Natural killer cell (primary cell): ENCODE measurements at regions of chr12 and their contacts with region 1.

Region 1: DNA sequence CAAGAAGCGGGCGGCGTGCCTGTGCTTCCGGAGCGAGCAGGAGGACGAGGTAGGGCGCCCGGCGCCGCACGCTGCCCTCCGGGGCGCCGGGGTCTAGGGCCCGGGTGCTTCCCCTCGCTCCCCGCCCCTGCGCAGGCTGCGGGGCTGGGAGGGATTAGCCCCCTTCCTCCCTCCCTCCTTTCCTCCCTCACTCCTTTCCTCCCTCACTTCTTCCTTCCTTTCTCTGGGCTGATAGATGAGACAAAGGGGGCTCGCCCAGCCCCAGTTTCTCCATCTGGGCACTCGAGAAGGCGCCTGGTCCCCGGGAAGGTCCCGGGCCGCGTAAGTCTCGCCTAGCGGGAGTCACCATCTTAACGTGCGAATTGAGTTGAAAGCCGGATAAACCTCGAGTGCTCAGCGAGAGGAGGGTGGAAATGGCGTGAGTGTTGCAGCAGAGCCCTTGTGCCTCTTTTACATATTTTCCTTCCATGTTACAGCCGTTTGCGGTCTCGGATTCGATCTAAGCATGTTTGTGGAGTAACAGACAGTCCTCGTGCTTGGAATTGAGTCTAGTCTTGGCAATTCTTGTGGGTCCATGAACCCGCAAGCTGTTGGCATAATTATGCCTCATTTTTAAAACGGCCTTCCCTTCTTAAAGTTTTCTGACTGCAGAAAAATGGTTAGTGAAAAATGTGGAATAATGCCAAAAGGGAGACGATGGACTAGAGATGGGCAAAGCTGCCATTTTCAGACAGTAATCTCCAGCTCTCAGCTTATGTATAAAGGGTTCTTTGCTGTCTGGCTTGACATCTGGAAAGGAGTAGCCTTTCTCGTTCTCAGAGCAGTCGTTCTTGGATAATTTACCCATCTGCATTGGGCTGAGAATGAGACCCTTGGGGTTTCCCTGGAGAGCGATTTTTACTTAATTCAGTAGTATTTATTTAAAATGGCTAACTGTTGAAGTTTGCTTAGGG is 924 bp downstream of the NUDT4 start:
- DNase-seq: peak; percentile 53 to 84
- ATAC-seq: peak; percentile 49 to 71 (median 54)
- H3K4me3 ChIP-seq: peak overlapping the region; percentile 67
- H3K4me3 Mint-ChIP-seq: peak overlapping the region; percentile 99
- H3K27ac ChIP-seq: peak overlapping the region; percentile 76
- H3K27ac Mint-ChIP-seq: peak overlapping the region; percentile 93 to 98
- H3K4me1 ChIP-seq: peaks cover 14% of the 10 kb centered on the region
- H3K4me1 Mint-ChIP-seq: peaks cover 33 to 46% of the 10 kb centered on the region in 2 donors
- H3K27me3 ChIP-seq: no peaks in the 10 kb centered on the region
- H3K27me3 Mint-ChIP-seq: peaks cover 0 to 5% of the 10 kb centered on the region in 2 donors
- CTCF ChIP-seq: no peak

Region 2: GRCh38 chr12:93166541-93167307 is 211.9 kb before region 1 on chr12:
- intact Hi-C with region 1: no loop called
- DNase-seq: no peak
- ATAC-seq: no peak
- H3K4me3 ChIP-seq: no peak overlapping the region
- H3K4me3 Mint-ChIP-seq: no peak overlapping the region
- H3K27ac ChIP-seq: no peak overlapping the region
- H3K27ac Mint-ChIP-seq: no peak overlapping the region
- H3K4me1 ChIP-seq: no peaks in the 10 kb centered on the region
- H3K4me1 Mint-ChIP-seq: no peaks in the 10 kb centered on the region
- H3K27me3 ChIP-seq: no peaks in the 10 kb centered on the region
- H3K27me3 Mint-ChIP-seq: peaks cover 2 to 10% of the 10 kb centered on the region in 2 donors
- CTCF ChIP-seq: no peak

Region 3: GRCh38 chr12:93427779-93428563 is 49.3 kb after region 1 on chr12:
- intact Hi-C with region 1: no loop called
- DNase-seq: no peak
- ATAC-seq: no peak
- H3K4me3 ChIP-seq: no peak overlapping the region
- H3K4me3 Mint-ChIP-seq: no peak overlapping the region
- H3K27ac ChIP-seq: no peak overlapping the region
- H3K27ac Mint-ChIP-seq: peak overlapping the region; percentile 58 to 72
- H3K4me1 ChIP-seq: peaks cover 12% of the 10 kb centered on the region
- H3K4me1 Mint-ChIP-seq: peaks cover 80 to 87% of the 10 kb centered on the region in 2 donors
- H3K27me3 ChIP-seq: no peaks in the 10 kb centered on the region
- H3K27me3 Mint-ChIP-seq: no peaks in the 10 kb centered on the region
- CTCF ChIP-seq: no peak

Region 4: DNA sequence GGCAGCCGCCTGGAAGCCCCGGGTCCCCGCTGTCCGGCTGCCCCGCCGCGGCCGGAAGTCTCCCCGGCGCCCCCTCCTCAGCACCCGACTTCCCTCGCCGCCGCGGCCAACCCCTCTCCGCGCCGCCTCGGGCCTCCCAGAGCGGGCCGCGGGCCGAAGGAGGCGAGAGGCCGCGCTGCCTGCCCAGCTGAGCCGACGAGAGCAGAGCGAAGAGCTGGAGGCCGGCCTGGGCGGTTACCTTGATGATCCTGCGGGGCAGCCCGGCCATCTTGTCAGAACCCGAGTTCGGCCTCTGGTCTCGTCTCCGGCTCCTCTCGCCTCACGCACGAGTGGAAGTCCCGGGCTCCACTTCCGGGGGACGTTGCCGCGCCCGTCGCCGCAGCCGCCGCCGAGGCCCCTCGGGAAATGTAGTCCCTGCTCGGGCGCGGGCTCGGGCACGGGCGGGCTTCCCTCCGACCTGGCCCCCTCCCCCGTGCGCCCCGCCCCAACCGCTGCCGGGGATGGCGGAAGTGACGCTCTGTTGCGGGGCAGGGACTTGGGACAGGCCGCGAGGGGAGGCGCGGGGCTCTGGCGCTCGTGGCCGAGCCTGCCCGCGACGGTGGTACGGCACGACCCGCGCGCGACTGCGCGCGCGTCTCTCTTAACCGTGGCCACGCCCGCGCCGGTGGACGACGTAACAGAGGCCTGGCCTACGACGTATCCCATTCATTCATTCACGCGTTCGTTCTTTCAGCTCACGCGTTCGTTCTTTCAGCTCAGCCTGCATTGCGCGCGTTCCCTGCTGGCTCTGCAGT is 63.2 kb after region 1 on chr12 and contains the start of gene UBE2N:
- intact Hi-C with region 1: loop called (anchors 5 kb)
- DNase-seq: peak; percentile 95 to 96
- ATAC-seq: peak; percentile 86 to 96 (median 87)
- H3K4me3 ChIP-seq: peak within 1 kb of the TSS; percentile 70
- H3K4me3 Mint-ChIP-seq: peak within 1 kb of the TSS; percentile 98
- H3K27ac ChIP-seq: peak within 1 kb of the TSS; percentile 92
- H3K27ac Mint-ChIP-seq: peak within 1 kb of the TSS; percentile 96 to 98
- H3K4me1 ChIP-seq: peaks cover 23% of the 10 kb centered on the region
- H3K4me1 Mint-ChIP-seq: peaks cover 48% of the 10 kb centered on the region in 2 donors
- H3K27me3 ChIP-seq: no peaks in the 10 kb centered on the region
- H3K27me3 Mint-ChIP-seq: no peaks in the 10 kb centered on the region
- CTCF ChIP-seq: no peak
- total RNA-seq, gene UBE2N: 72.3 to 79.7 (median 72.9) TPM

Region 5: GRCh38 chr12:93467351-93468007 is 88.8 kb after region 1 on chr12 and contains the start of gene MRPL42:
- intact Hi-C with region 1: loop called (anchors 1 kb)
- DNase-seq: peak; percentile 94 to 95
- ATAC-seq: peak; percentile 94 to 95 (median 95)
- H3K4me3 ChIP-seq: peak within 1 kb of the TSS; percentile 62
- H3K4me3 Mint-ChIP-seq: peak within 1 kb of the TSS; percentile 90
- H3K27ac ChIP-seq: peak within 1 kb of the TSS; percentile 67
- H3K27ac Mint-ChIP-seq: peak within 1 kb of the TSS; percentile 91 to 94
- H3K4me1 ChIP-seq: peaks cover 8% of the 10 kb centered on the region
- H3K4me1 Mint-ChIP-seq: peaks cover 22 to 27% of the 10 kb centered on the region in 2 donors
- H3K27me3 ChIP-seq: no peaks in the 10 kb centered on the region
- H3K27me3 Mint-ChIP-seq: peaks cover 0 to 3% of the 10 kb centered on the region in 2 donors
- CTCF ChIP-seq: peak; percentile 84
- total RNA-seq, gene MRPL42: 36.4 to 42.7 (median 37.1) TPM

Region 6: GRCh38 chr12:94039914-94040313 is 661.3 kb after region 1 on chr12:
- intact Hi-C with region 1: no loop called
- DNase-seq: no peak
- ATAC-seq: no peak
- H3K4me3 ChIP-seq: no peak overlapping the region
- H3K4me3 Mint-ChIP-seq: no peak overlapping the region
- H3K27ac ChIP-seq: no peak overlapping the region
- H3K27ac Mint-ChIP-seq: no peak overlapping the region
- H3K4me1 ChIP-seq: no peaks in the 10 kb centered on the region
- H3K4me1 Mint-ChIP-seq: no peaks in the 10 kb centered on the region
- H3K27me3 ChIP-seq: no peaks in the 10 kb centered on the region
- H3K27me3 Mint-ChIP-seq: peaks cover 3 to 7% of the 10 kb centered on the region in 2 donors
- CTCF ChIP-seq: no peak